HCT116 (cell line): ENCODE measurements at regions of chr1 and their contacts with region 1.

Region 1: DNA sequence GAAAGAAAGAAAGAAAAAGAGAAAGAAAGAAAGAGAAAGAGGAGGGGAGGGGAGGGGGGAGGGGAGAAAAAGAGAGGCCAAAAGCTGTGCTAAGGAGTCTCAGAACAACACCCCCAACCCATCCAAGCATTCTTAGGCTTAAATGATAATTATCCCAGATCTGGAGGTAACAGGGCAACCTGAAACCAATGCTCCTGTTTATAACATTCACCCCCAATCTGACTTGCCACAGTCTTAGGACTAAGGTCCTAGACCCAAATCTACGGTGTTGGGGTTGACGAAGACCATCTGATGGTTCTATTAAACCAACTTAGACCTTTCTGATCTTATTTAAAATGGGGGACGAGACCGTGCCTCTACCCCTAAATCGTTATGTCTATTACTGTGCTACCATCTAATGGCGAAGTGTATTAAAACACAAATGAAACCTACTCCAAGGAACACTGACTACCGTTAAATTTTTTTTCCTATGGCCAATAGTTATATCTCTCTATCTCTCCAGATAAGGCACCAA is 119.3 kb upstream of the CDC42BPA start:
- DNase-seq: peak; percentile 55
- ATAC-seq: peak; percentile 91
- H3K4me3 ChIP-seq: peak overlapping the region; percentile 28 to 33; a peak in 3 of 4 replicates
- H3K27ac ChIP-seq: no peak overlapping the region
- H3K4me1 ChIP-seq: no peaks in the 10 kb centered on the region; a peak in 1 of 4 replicates
- H3K27me3 ChIP-seq: no peaks in the 10 kb centered on the region
- CTCF ChIP-seq: peak; percentile 29 to 83 (median 64); a peak in 5 of 6 replicates
- POLR2A ChIP-seq: no peak
- RAD21 ChIP-seq: peak; percentile 96

Region 2: DNA sequence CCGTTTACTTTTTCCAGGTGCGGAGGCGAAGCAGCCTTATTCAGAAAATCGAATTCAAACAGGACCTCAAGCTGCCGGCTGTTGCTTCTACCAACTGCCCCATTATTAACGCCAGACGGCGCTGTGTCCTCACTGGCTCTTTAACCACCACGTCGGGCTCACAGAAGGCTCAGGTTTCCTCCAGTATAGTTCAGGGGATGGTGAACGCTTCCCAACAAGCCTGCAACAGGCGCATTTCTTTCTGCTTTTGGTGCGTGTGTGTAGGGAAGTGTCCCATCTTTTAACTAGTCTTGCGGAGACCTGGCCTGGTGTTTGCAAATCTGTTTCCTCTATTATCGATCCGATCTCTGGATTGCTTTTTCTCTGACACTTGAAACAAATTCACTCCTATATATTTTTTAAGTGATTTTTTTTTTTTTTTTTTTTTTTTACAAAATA is 889.8 kb before region 1 on chr1:
- CTCF ChIA-PET with region 1: no interaction called
- POLR2A ChIA-PET with region 1: no interaction called
- RAD21 ChIA-PET with region 1: no interaction called
- intact Hi-C with region 1: loop called (anchors 2 kb)
- DNase-seq: peak; percentile 79
- ATAC-seq: peak; percentile 96
- H3K4me3 ChIP-seq: no peak overlapping the region
- H3K27ac ChIP-seq: no peak overlapping the region
- H3K4me1 ChIP-seq: peaks cover 0 to 21% of the 10 kb centered on the region in 2 experiments; a peak in 2 of 4 replicates
- H3K27me3 ChIP-seq: peaks cover 3% of the 10 kb centered on the region; the same call in 1 of the 2 replicates
- CTCF ChIP-seq: peak; percentile 91 to 98 (median 97)
- POLR2A ChIP-seq: no peak
- RAD21 ChIP-seq: peak; percentile 91

Region 3: GRCh38 chr1:226634166-226634588 is 803.4 kb before region 1 on chr1:
- CTCF ChIA-PET with region 1: interaction called, 7 read pairs
- POLR2A ChIA-PET with region 1: no interaction called
- RAD21 ChIA-PET with region 1: no interaction called
- intact Hi-C with region 1: loop called (anchors 2 kb)
- DNase-seq: peak; percentile 39
- ATAC-seq: peak; percentile 94
- H3K4me3 ChIP-seq: no peak overlapping the region
- H3K27ac ChIP-seq: no peak overlapping the region
- H3K4me1 ChIP-seq: peaks cover 7 to 18% of the 10 kb centered on the region in 2 experiments; a peak in 3 of 4 replicates
- H3K27me3 ChIP-seq: 0 out of 2 replicates have a peak, but pooled peaks cover 3% of the 10 kb centered on the region
- CTCF ChIP-seq: peak; percentile 92 to 93 (median 92)
- POLR2A ChIP-seq: no peak
- RAD21 ChIP-seq: peak; percentile 99

Region 4: GRCh38 chr1:227131193-227131592 is 306.4 kb before region 1 on chr1:
- CTCF ChIA-PET with region 1: no interaction called
- POLR2A ChIA-PET with region 1: no interaction called
- RAD21 ChIA-PET with region 1: no interaction called
- intact Hi-C with region 1: loop called (anchors 2 kb)
- DNase-seq: peak; percentile 15
- ATAC-seq: peak; percentile 68; the same call in 1 of the 2 replicates
- H3K4me3 ChIP-seq: no peak overlapping the region
- H3K27ac ChIP-seq: no peak overlapping the region
- H3K4me1 ChIP-seq: no peaks in the 10 kb centered on the region
- H3K27me3 ChIP-seq: no peaks in the 10 kb centered on the region
- CTCF ChIP-seq: peak; percentile 20 to 76 (median 56); a peak in 4 of 6 replicates
- POLR2A ChIP-seq: no peak
- RAD21 ChIP-seq: peak; percentile 51